ENCODE measurements at regions of chr2 and their contacts with region 1.

Region 1: DNA sequence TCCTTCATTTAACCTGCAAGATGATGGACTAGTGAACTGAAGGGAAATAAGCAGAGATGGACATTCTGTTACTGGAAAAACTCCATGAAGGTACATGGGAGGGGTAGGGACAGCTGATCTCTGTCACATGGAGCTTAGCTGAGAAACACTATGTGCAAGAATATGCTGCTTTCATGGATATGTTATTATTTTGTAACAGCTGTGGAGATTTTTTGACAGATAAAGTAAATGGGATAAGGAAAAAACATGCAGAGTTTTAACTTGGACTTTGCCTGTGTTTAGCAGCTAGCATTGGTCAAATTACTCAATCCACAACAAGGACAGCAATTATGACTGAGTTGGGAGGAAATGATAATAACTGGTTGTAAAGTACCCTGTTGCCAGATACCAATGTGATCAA is 28.7 kb upstream of the HNRNPA3 start:
- DNase-seq: no peak
- H3K4me3 Mint-ChIP-seq: no peak overlapping the region
- H3K27ac Mint-ChIP-seq: no peak overlapping the region
- H3K4me1 Mint-ChIP-seq: no peaks in the 10 kb centered on the region
- H3K27me3 Mint-ChIP-seq: no peaks in the 10 kb centered on the region

Region 2: DNA sequence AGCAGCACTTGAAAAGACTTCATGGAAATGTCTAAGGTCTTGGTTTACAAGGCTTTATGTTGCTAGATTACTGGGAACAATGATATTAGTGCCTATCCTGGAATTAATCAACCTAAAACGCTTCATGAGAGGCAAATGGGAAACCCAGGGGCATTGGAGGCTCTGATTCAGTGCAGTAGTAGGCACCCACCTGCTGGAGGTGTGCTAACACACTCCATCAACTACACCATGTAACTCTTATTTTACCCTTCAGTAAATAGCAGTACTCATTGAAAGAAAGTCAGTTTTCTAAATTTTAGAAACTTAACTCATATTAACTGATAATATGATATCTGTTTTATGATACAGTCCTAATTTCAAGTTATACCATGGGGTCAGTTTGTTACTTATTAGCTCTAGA is 11.3 kb after region 1 on chr2:
- CTCF ChIA-PET with region 1: interaction called, 19 read pairs
- intact Hi-C with region 1: no loop called
- DNase-seq: peak; percentile 18
- H3K4me3 Mint-ChIP-seq: no peak overlapping the region
- H3K27ac Mint-ChIP-seq: no peak overlapping the region
- H3K4me1 Mint-ChIP-seq: no peaks in the 10 kb centered on the region
- H3K27me3 Mint-ChIP-seq: no peaks in the 10 kb centered on the region

Region 3: DNA sequence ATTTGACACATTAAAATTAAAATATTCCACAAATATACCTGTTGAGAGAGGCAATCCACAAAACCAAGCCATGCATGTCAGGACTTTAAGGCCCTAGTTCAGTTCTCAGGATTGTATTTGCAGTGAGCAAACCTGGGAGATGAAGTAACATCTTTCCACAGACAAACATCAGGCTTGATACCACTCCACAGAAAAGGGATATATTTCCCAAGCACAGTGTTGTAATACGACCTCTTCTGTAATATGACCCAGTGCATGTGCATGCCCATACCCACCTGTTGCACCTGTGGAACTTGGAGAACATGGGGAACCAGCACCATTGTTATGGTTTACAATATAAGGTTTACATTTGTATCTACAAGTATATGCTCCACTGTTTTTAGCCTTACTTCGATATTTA is 704.7 kb after region 1 on chr2:
- CTCF ChIA-PET with region 1: no interaction called
- intact Hi-C with region 1: no loop called
- DNase-seq: no peak
- H3K4me3 Mint-ChIP-seq: no peak overlapping the region
- H3K27ac Mint-ChIP-seq: no peak overlapping the region
- H3K4me1 Mint-ChIP-seq: no peaks in the 10 kb centered on the region
- H3K27me3 Mint-ChIP-seq: peaks cover 2% of the 10 kb centered on the region